MCF 10A (cell line): ENCODE measurements at regions of chr1 and their contacts with region 1.

Region 1: GRCh38 chr1:211345719-211346118 is 19.1 kb downstream of the TRAF5 start:
- DNase-seq: no peak
- H3K4me3 Mint-ChIP-seq: no peak overlapping the region
- H3K27ac Mint-ChIP-seq: no peak overlapping the region
- H3K4me1 Mint-ChIP-seq: peaks cover 12% of the 10 kb centered on the region
- H3K27me3 Mint-ChIP-seq: no peaks in the 10 kb centered on the region
- CTCF ChIP-seq: no peak

Region 2: GRCh38 chr1:210905944-210906453 is 439.7 kb before region 1 on chr1:
- CTCF ChIA-PET with region 1: no interaction called
- POLR2A ChIA-PET with region 1: no interaction called
- intact Hi-C with region 1: no loop called
- DNase-seq: no peak
- H3K4me3 Mint-ChIP-seq: no peak overlapping the region
- H3K27ac Mint-ChIP-seq: no peak overlapping the region
- H3K4me1 Mint-ChIP-seq: peaks cover 23% of the 10 kb centered on the region
- H3K27me3 Mint-ChIP-seq: no peaks in the 10 kb centered on the region
- CTCF ChIP-seq: no peak

Region 3: GRCh38 chr1:211281320-211282022 is 64.2 kb before region 1 on chr1:
- CTCF ChIA-PET with region 1: no interaction called
- POLR2A ChIA-PET with region 1: no interaction called
- intact Hi-C with region 1: no loop called
- DNase-seq: no peak
- H3K4me3 Mint-ChIP-seq: no peak overlapping the region
- H3K27ac Mint-ChIP-seq: no peak overlapping the region
- H3K4me1 Mint-ChIP-seq: no peaks in the 10 kb centered on the region
- H3K27me3 Mint-ChIP-seq: no peaks in the 10 kb centered on the region
- CTCF ChIP-seq: no peak

Region 4: GRCh38 chr1:211329764-211330201 is 15.9 kb before region 1 on chr1:
- CTCF ChIA-PET with region 1: interaction called, 153 read pairs
- POLR2A ChIA-PET with region 1: interaction called, 4 read pairs
- intact Hi-C with region 1: no loop called
- DNase-seq: no peak
- H3K4me3 Mint-ChIP-seq: no peak overlapping the region
- H3K27ac Mint-ChIP-seq: no peak overlapping the region
- H3K4me1 Mint-ChIP-seq: peaks cover 47% of the 10 kb centered on the region
- H3K27me3 Mint-ChIP-seq: no peaks in the 10 kb centered on the region
- CTCF ChIP-seq: no peak